A549 (cell line): ENCODE measurements at regions of chr22 and their contacts with region 1.

Region 1: GRCh38 chr22:29306175-29306834 is at the start of gene GAS2L1:
- DNase-seq: peak; percentile 76 to 86
- ATAC-seq: peak; percentile 51 to 79
- H3K4me3 ChIP-seq: peak within 1 kb of the TSS; percentile 80
- H3K27ac ChIP-seq: peak within 1 kb of the TSS; percentile 96 to 98
- H3K4me1 ChIP-seq: peaks cover 46% of the 10 kb centered on the region
- CTCF ChIP-seq: peak; percentile 26; the same call in 1 of the 3 replicates
- EP300 ChIP-seq: no peak
- POLR2A ChIP-seq: no peak
- RAD21 ChIP-seq: peak in 1 of 2 experiments; percentile 43; a peak in 2 of 5 replicates
- polyA plus RNA-seq, gene GAS2L1: 6.5 and 7.6 TPM in 2 replicates

Region 2: DNA sequence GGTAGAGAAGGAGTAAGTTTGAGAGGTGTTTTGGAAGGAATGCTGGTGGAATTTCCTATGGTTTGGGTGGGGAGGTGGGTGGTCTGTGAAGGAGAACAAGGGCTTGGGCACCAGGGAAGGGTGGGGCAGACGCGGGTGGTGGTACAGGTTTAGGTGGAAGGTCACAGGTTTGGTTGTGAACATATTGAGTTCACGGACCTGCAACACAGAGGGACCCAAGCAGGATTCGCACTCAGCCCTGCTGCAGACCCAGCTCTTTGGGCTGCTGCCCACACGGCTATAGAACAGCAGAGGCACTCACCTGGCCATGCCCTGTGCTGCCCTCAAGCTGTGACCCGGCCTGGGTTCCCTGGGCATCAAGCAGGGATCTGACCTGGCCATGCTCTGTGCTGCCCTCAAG is 134.1 kb before region 1 on chr22:
- CTCF ChIA-PET with region 1: no interaction called
- POLR2A ChIA-PET with region 1: no interaction called
- DNase-seq: no peak
- ATAC-seq: no peak
- H3K4me3 ChIP-seq: no peak overlapping the region
- H3K27ac ChIP-seq: no peak overlapping the region
- H3K4me1 ChIP-seq: no peaks in the 10 kb centered on the region
- CTCF ChIP-seq: no peak
- EP300 ChIP-seq: no peak
- POLR2A ChIP-seq: no peak
- RAD21 ChIP-seq: no peak

Region 3: DNA sequence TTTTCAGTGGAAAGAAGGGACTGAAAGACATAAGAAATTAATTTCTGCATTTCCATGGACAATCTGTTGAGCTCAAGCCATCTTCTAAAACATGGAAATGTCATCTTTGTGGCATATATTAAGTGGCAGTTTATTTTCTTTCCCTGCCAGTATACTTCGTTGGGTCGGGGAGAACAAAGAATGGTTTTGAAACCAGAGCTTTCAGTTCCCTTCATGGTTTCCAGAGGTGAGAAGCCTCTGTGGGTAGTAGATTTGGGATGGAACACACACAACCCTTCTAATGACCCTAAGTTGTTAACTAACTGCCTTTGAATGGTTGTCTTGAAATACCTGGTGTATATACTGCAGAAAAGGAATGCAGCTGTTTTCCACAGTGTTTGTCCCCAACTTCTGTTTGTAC is 17.5 kb before region 1 on chr22:
- CTCF ChIA-PET with region 1: interaction called, 14 read pairs
- POLR2A ChIA-PET with region 1: no interaction called
- DNase-seq: no peak
- ATAC-seq: no peak
- H3K4me3 ChIP-seq: no peak overlapping the region
- H3K27ac ChIP-seq: no peak overlapping the region
- H3K4me1 ChIP-seq: no peaks in the 10 kb centered on the region; the same call in 2 of the 3 replicates
- CTCF ChIP-seq: no peak
- EP300 ChIP-seq: no peak
- POLR2A ChIP-seq: no peak
- RAD21 ChIP-seq: no peak

Region 4: GRCh38 chr22:29320546-29320945 is 14.2 kb after region 1 on chr22:
- CTCF ChIA-PET with region 1: interaction called, 16 read pairs
- POLR2A ChIA-PET with region 1: no interaction called
- DNase-seq: no peak
- ATAC-seq: peak; percentile 71 to 86; a peak in 4 of 6 replicates
- H3K4me3 ChIP-seq: no peak overlapping the region
- H3K27ac ChIP-seq: no peak overlapping the region
- H3K4me1 ChIP-seq: no peaks in the 10 kb centered on the region
- CTCF ChIP-seq: 0 out of 3 replicates have a peak, but pooled peaks have one; percentile 13
- EP300 ChIP-seq: no peak
- POLR2A ChIP-seq: no peak
- RAD21 ChIP-seq: no peak

Region 5: DNA sequence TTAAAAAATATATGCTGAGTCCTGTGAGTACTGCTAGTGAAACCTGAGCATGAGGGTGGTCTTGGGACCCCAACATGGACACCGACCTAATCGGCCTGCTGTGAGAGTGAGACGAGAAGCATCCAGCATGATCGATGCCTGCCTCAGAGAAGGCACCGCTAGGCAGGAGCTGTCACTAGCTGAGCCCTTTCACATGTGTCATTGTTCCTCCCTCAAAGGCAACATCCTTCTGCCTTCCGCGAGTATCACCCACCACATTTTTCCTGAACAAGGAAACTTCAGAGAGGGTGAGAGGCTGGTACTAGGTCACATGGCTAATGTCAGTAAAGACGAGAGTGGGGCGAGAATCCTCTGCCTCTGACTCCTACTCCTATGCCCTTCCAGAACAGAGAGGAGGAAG is 46.5 kb after region 1 on chr22:
- CTCF ChIA-PET with region 1: interaction called, 11 read pairs
- POLR2A ChIA-PET with region 1: no interaction called
- DNase-seq: no peak
- ATAC-seq: no peak
- H3K4me3 ChIP-seq: no peak overlapping the region
- H3K27ac ChIP-seq: no peak overlapping the region
- H3K4me1 ChIP-seq: no peaks in the 10 kb centered on the region
- CTCF ChIP-seq: no peak
- EP300 ChIP-seq: no peak
- POLR2A ChIP-seq: no peak
- RAD21 ChIP-seq: no peak